ENCODE measurements at regions of chr9 and their contacts with region 1.

Region 1: DNA sequence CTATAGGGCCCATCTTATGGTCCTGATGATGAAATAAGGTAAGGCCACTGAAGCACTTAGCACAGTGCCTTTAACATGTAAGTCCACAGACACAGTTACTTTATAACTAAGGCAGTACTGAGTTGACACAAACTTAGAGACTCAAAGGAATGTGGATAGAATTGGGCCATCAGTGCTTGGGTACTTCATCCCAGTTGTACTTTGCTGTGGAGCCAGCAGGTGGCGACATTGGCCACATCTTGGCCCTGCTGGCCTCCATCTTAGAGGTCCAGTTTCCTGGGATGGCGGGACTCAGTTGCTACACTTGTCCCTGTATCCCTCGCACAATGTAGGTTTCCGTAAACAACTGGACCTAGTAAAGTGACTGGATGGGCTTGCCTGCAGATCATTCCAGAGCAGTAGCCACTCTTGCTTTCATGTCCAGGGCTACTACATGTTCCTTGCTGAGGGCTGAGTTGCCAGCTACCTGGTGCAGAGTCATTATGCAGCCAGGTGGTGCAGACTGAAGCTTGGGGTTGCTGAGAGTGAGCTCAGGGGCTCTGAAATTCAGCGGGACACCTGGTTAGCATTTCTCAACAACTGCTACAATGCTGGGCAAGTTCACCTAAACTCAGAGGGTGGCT is 10.6 kb downstream of the MTAP start:
- DNase-seq: peak; percentile 80
- H3K4me3 ChIP-seq: no peak overlapping the region
- H3K27ac ChIP-seq: no peak overlapping the region
- H3K4me1 ChIP-seq: no peaks in the 10 kb centered on the region
- H3K27me3 ChIP-seq: no peaks in the 10 kb centered on the region
- CTCF ChIP-seq: peak; percentile 68 to 84 (median 79)
- POLR2A ChIP-seq: no peak

Region 2: GRCh38 chr9:21709464-21710058 is 103.5 kb before region 1 on chr9:
- intact Hi-C with region 1: no loop called
- DNase-seq: peak; percentile 87
- H3K4me3 ChIP-seq: no peak overlapping the region
- H3K27ac ChIP-seq: no peak overlapping the region
- H3K4me1 ChIP-seq: no peaks in the 10 kb centered on the region
- H3K27me3 ChIP-seq: no peaks in the 10 kb centered on the region
- CTCF ChIP-seq: peak in 2 of 3 experiments; percentile 70 to 84
- POLR2A ChIP-seq: no peak

Region 3: GRCh38 chr9:22238809-22239684 is 426.0 kb after region 1 on chr9:
- intact Hi-C with region 1: loop called (anchors 10 kb)
- DNase-seq: no peak
- H3K4me3 ChIP-seq: no peak overlapping the region
- H3K27ac ChIP-seq: no peak overlapping the region
- H3K4me1 ChIP-seq: no peaks in the 10 kb centered on the region
- H3K27me3 ChIP-seq: no peaks in the 10 kb centered on the region
- CTCF ChIP-seq: peak in 2 of 3 experiments; percentile 18 to 48
- POLR2A ChIP-seq: no peak

Region 4: DNA sequence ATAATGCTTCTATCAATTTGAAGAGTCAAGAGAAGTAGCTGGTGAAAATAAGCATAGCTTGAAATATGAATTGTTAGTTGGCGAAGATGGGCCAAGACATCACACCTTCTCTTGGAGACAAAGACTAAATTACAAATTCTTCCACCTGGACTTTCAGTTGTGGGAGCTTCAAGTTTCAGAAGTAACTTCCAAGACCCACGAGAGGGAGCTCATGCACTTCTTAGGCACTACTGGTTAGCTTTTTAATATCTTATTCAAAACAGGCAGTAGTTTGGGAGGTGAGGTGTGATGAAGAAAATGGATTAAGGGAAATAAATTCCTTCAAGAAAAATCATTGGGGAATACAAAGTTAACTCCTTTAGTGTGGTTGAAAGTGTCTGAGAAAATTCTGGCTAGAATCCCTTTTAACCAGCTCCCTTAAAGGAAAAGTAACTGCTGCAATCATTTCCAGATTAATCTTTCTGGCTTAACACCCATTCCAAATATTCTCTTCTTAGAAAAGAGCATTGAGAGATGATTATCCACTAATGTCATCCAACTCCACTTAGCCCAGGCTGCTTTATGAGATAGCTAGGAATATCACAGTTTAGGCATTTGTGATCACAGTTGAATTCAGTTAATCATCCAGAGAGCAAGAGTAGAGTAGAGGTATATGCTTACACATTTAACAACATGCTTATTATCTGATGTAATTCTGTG is 494.1 kb after region 1 on chr9:
- intact Hi-C with region 1: no loop called
- DNase-seq: peak; percentile 45
- H3K4me3 ChIP-seq: no peak overlapping the region
- H3K27ac ChIP-seq: no peak overlapping the region
- H3K4me1 ChIP-seq: no peaks in the 10 kb centered on the region
- H3K27me3 ChIP-seq: no peaks in the 10 kb centered on the region
- CTCF ChIP-seq: peak in 2 of 3 experiments; percentile 27 to 40
- POLR2A ChIP-seq: no peak

Measured in testis (tissue), 5 donors.